Gastrocnemius medialis (tissue), 4 donors: ENCODE measurements at regions of chr12 and their contacts with region 1.

Region 1: GRCh38 chr12:50103767-50104321 is at the start of gene GPD1:
- DNase-seq: peak; percentile 65 to 93
- ATAC-seq: peak; percentile 75 to 78
- H3K4me3 ChIP-seq: peak within 1 kb of the TSS; percentile 43 to 55 (median 51)
- H3K27ac ChIP-seq: peak within 1 kb of the TSS; percentile 92 to 95 (median 95)
- H3K4me1 ChIP-seq: peaks cover 61 to 62% of the 10 kb centered on the region in 2 donors
- H3K27me3 ChIP-seq: no peaks in the 10 kb centered on the region
- CTCF ChIP-seq: peak in 1 of 5 experiments; percentile 27
- POLR2A ChIP-seq: peak; percentile 81 to 93
- total RNA-seq, gene GPD1: 68.2 to 763 (median 288) TPM

Region 2: GRCh38 chr12:49088190-49088931 is 1015.5 kb before region 1 on chr12:
- in situ Hi-C with region 1: no loop called
- intact Hi-C with region 1: no loop called
- DNase-seq: peak; percentile 51 to 77
- ATAC-seq: peak; percentile 94 to 97
- H3K4me3 ChIP-seq: peak overlapping the region in 2 of 4 donors; percentile 20 to 40
- H3K27ac ChIP-seq: no peak overlapping the region
- H3K4me1 ChIP-seq: peaks cover 8 to 22% of the 10 kb centered on the region in 2 donors
- H3K27me3 ChIP-seq: peaks cover 42 to 45% (median 45%) of the 10 kb centered on the region in 3 donors
- CTCF ChIP-seq: peak; percentile 72 to 92 (median 87)
- POLR2A ChIP-seq: no peak

Region 3: GRCh38 chr12:50055831-50056638 is 47.8 kb before region 1 on chr12:
- in situ Hi-C with region 1: no loop called
- intact Hi-C with region 1: no loop called
- DNase-seq: no peak
- ATAC-seq: peak; percentile 21 to 44
- H3K4me3 ChIP-seq: no peak overlapping the region
- H3K27ac ChIP-seq: no peak overlapping the region
- H3K4me1 ChIP-seq: peaks cover 14 to 15% of the 10 kb centered on the region in 2 donors
- H3K27me3 ChIP-seq: peaks cover 3 to 11% (median 4%) of the 10 kb centered on the region in 3 donors
- CTCF ChIP-seq: peak; percentile 68 to 89 (median 85)
- POLR2A ChIP-seq: no peak

Region 4: DNA sequence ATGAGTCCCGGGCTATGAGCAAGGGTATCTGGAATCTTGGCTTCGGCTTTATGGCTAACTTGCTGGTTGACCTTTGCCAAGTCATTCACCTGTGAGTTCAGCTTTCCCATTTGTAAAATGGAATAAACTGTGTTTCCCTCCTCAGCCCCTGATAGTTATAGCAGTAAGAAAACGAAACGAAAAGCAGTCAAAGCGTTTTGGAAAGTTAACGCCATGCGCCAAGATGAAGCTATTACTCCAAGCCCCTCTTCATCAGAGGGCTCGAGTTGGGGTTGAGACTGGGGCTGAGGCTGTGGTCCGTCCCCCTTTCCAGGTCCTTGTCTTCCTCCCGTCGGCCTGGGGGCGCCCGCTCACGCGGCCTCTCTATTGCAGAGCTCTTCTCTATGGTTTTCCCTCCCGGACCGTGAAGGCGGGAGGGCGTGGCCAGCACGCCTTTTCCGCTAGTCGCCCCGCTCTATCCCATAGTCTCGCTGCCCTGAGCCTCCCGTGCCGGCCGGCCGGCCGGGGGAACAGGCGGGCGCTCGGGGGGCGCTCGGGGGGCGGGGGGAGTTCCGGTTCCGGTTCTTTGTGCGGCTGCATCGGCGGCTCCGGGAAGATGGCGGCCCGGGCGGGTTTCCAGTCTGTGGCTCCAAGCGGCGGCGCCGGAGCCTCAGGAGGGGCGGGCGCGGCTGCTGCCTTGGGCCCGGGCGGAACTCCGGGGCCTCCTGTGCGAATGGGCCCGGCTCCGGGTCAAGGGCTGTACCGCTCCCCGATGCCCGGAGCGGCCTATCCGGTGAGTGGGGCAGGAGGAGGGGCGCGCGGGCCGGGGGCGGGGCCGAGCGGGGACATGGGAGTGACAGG is 18.8 kb before region 1 on chr12 and contains the start of gene SMARCD1:
- in situ Hi-C with region 1: no loop called
- intact Hi-C with region 1: loop called (anchors 1 kb)
- DNase-seq: peak; percentile 86 to 88
- ATAC-seq: peak; percentile 81 to 91
- H3K4me3 ChIP-seq: peak within 1 kb of the TSS; percentile 81 to 95 (median 88)
- H3K27ac ChIP-seq: peak within 1 kb of the TSS; percentile 92 to 99 (median 96)
- H3K4me1 ChIP-seq: peaks cover 13 to 14% of the 10 kb centered on the region in 2 donors
- H3K27me3 ChIP-seq: no peaks in the 10 kb centered on the region
- CTCF ChIP-seq: peak in 2 of 5 experiments; percentile 26 to 41
- POLR2A ChIP-seq: peak in 1 of 2 donors; percentile 37
- total RNA-seq, gene SMARCD1: 16.9 to 27.3 (median 20.1) TPM